ENCODE measurements at regions of chr12 and their contacts with region 1.

Region 1: DNA sequence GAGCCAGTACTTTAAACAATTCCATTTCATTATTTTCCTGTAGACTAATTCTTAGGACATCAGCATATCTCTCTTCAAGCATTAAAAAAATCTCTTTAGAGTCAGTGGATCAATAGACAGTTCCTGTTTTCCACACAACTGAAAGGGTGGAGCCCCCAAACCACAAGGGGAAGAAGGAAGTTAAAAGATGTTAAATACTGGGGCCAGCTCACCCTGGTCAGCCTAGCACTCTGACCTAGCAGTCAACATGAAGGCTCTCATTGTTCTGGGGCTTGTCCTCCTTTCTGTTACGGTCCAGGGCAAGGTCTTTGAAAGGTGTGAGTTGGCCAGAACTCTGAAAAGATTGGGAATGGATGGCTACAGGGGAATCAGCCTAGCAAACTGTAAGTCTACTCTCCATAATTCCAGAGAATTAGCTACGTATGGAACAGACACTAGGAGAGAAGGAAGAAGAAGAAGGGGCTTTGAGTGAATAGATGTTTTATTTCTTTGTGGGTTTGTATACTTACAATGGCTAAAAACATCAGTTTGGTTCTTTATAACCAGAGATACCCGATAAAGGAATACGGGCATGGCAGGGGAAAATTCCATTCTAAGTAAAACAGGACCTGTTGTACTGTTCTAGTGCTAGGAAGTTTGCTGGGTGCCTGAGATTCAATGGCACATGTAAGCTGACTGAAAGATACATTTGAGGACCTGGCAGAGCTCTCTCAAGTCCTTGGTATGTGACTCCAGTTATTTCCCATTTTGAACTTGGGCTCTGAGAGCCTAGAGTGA is at the start of gene LYZ:
- H3K4me3 Mint-ChIP-seq: peak within 1 kb of the TSS; percentile 91
- H3K27ac Mint-ChIP-seq: peak within 1 kb of the TSS; percentile 91
- H3K4me1 Mint-ChIP-seq: peaks cover 27% of the 10 kb centered on the region
- H3K27me3 Mint-ChIP-seq: no peaks in the 10 kb centered on the region

Region 2: DNA sequence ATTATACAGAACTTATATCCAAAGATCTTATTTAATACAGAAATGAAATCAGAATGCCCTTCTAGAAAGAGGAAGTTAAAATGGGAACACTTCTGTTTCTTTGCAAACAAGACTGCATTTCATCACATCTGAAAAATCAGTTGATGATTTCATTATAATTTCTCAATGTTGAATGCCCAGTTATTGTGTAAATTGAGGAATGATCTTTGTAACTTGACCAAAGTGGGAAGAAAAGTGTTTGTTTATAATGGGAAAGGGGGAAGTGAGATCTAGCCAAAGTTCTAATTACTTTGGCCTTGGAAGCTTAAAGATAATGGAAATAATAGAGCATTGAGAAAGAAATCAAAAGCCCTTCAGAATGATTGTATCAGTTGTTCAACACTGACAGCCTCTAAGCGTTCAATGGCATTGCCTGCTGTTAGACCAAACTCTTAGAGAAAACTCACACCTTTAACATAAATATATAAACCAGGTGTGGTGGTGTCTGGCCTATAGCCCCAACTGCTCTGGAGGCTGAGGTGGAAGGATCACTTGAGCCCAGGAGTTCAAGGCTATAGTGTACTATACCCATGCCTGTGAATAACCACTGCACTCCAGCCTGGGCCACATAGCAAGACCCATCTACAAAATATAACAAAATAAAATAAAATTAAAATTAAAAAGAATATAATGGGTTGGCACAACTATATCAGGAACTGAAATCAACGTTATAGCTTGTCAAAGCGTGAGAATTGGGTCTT is 10.1 kb before region 1 on chr12:
- intact Hi-C with region 1: loop called (anchors 1 kb)
- H3K4me3 Mint-ChIP-seq: peak overlapping the region; percentile 21
- H3K27ac Mint-ChIP-seq: peak overlapping the region; percentile 82
- H3K4me1 Mint-ChIP-seq: peaks cover 81% of the 10 kb centered on the region
- H3K27me3 Mint-ChIP-seq: no peaks in the 10 kb centered on the region

Region 3: DNA sequence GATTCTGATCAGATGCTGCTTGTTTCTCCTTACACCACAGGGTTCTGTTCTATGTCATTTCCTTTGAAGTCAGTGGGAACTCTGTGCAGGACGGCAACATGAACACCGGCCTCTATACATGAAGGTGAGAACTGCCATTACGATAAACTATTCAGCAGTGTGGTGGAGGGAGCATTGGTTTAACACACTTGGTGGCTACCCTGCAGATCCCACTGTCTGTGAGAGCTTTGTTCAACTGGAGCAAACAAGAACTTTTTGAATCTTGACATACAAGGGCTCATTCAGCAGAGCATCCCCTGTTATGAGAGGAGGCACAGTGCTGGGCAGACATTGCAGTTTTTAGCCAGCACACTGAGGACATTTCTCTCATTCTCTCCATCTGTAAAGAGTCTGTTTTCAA is 111.1 kb after region 1 on chr12:
- intact Hi-C with region 1: no loop called
- H3K4me3 Mint-ChIP-seq: no peak overlapping the region
- H3K27ac Mint-ChIP-seq: no peak overlapping the region
- H3K4me1 Mint-ChIP-seq: no peaks in the 10 kb centered on the region
- H3K27me3 Mint-ChIP-seq: no peaks in the 10 kb centered on the region